ENCODE measurements at regions of chr1 and their contacts with region 1.

Region 1: DNA sequence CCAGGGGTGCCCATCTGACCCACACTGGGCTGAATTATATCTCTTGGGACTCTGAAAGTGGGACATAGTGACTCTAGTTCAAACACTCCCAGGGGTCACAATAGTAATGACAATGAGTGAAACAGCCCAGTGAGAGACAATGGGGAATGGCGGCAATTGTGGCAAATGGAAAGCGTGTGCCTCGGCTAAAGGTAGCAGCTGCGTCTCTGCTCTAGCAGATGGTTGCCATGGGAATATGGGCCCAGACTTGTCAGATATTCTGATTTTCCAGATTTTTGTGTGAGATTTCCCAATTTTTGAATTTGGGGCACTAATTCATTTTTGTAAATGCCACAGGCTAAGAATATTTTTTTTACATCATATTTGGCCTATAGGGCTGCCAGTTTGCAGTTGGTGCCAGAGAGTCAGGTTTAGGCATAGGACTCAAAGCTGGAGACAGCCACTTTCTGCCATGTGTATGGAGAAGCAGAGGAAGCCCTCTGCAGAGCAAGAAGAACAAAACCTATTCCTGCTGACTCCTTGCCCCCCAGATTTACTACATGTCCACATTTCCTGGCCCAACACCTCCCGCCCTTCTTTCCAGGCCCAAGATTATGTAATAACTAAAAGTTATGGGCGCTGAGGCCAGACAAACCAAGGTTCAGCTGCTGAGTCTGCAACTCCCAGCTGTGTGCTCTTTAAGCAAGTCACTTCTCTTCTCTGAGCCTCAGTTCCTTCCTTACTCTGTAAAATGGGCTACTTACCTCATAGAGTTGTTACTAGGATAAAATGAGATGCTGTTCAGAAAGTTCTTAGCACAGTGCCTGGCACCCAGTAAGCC is 21.6 kb upstream of the PTP4A2 start:
- DNase-seq: peak in 1 of 5 donors; percentile 21
- H3K4me3 ChIP-seq: no peak overlapping the region
- H3K27ac ChIP-seq: no peak overlapping the region
- H3K4me1 ChIP-seq: peaks cover 0 to 10% (median 4%) of the 10 kb centered on the region in 3 donors
- H3K27me3 ChIP-seq: no peaks in the 10 kb centered on the region
- CTCF ChIP-seq: no peak

Region 2: GRCh38 chr1:31815752-31816500 is 143.8 kb before region 1 on chr1 and contains the start of gene SPOCD1:
- intact Hi-C with region 1: loop called (anchors 10 kb)
- DNase-seq: peak; percentile 82 to 88 (median 83)
- H3K4me3 ChIP-seq: no peak within 1 kb of the TSS
- H3K27ac ChIP-seq: no peak within 1 kb of the TSS
- H3K4me1 ChIP-seq: no peaks in the 10 kb centered on the region
- H3K27me3 ChIP-seq: no peaks in the 10 kb centered on the region
- CTCF ChIP-seq: peak; percentile 68
- total RNA-seq, gene SPOCD1: 0.98 TPM